Panc1 (cell line): ENCODE measurements at regions of chr2 and their contacts with region 1.

Region 1: GRCh38 chr2:136844546-136844945 is 79.2 kb downstream of the THSD7B start:
- DNase-seq: no peak
- ATAC-seq: no peak
- H3K4me3 ChIP-seq: no peak overlapping the region
- H3K27ac ChIP-seq: no peak overlapping the region
- H3K4me1 ChIP-seq: no peaks in the 10 kb centered on the region
- H3K27me3 ChIP-seq: no peaks in the 10 kb centered on the region
- CTCF ChIP-seq: no peak

Region 2: DNA sequence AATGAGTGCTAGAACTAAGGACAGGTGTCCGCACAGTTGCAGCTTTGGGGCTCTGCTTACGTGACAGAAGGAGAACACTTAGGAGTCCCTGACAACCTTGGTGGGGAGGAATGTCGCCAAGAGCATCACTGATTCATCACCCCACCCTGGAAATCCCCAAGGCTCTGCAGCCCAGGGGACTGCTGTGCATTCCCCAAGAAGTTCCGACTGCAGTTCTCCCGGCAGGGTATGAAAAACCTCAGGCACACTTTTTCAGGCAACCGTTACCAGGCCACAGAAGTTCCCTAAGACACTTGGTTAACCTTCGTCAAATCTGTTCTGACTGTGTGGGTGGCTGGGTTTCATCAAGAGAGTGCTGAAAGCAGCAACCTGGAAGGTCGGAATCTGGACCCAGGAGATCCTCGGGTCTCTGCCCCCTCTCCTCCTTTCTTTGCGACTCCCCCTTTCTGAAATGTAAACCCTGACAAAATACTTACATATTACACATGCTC is 534.5 kb before region 1 on chr2:
- CTCF ChIA-PET with region 1: no interaction called
- POLR2A ChIA-PET with region 1: no interaction called
- in situ Hi-C with region 1: no loop called
- intact Hi-C with region 1: loop called (anchors 10 kb)
- DNase-seq: no peak
- ATAC-seq: peak; percentile 56
- H3K4me3 ChIP-seq: no peak overlapping the region
- H3K27ac ChIP-seq: no peak overlapping the region
- H3K4me1 ChIP-seq: no peaks in the 10 kb centered on the region
- H3K27me3 ChIP-seq: 0 out of 2 replicates have a peak, but pooled peaks cover 2% of the 10 kb centered on the region
- CTCF ChIP-seq: no peak

Region 3: DNA sequence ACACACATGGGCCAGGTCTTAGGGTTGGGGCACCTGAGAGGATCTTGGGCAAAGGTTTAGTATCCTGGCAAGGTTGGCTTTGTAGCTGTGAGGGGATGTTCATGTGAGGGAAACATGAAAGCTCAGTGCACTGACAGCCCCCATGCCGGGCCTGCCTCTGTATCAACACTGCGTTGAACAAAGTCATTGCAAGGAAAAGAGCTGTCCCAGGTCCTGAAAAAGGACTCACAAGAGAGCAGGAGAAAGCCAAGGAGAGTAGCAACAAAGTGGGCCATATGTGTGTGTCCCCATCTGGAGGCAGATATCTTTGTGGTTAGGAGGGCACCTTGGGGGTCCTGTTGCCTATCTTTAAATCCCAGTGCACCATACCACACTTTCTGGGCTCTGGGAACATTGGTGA is 317.0 kb before region 1 on chr2:
- CTCF ChIA-PET with region 1: no interaction called
- POLR2A ChIA-PET with region 1: no interaction called
- in situ Hi-C with region 1: no loop called
- intact Hi-C with region 1: no loop called
- DNase-seq: no peak
- ATAC-seq: no peak
- H3K4me3 ChIP-seq: no peak overlapping the region
- H3K27ac ChIP-seq: no peak overlapping the region
- H3K4me1 ChIP-seq: no peaks in the 10 kb centered on the region
- H3K27me3 ChIP-seq: no peaks in the 10 kb centered on the region
- CTCF ChIP-seq: no peak

Region 4: GRCh38 chr2:136997557-136997956 is 153.0 kb after region 1 on chr2:
- CTCF ChIA-PET with region 1: no interaction called
- POLR2A ChIA-PET with region 1: no interaction called
- in situ Hi-C with region 1: no loop called
- intact Hi-C with region 1: no loop called
- DNase-seq: no peak
- ATAC-seq: no peak
- H3K4me3 ChIP-seq: no peak overlapping the region
- H3K27ac ChIP-seq: no peak overlapping the region
- H3K4me1 ChIP-seq: no peaks in the 10 kb centered on the region
- H3K27me3 ChIP-seq: no peaks in the 10 kb centered on the region
- CTCF ChIP-seq: no peak

Region 5: DNA sequence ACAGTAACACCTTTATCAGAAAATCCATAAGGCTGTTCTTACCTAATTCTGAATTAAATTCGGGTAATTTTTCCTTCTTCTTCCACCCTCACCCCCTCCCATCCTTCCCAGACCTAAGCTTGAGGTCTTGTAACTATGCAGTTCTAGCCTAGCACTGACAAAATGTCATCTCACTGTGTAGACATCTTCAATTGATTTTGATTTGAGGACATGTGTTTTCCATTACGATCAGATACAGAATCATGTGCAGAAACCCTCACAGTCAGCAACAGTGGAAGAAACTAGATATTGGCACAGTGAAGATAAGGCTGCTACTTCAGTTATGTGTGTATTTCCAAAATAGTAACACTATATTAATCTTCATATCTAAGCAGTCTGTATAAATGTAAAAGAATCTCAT is 165.4 kb after region 1 on chr2:
- CTCF ChIA-PET with region 1: no interaction called
- POLR2A ChIA-PET with region 1: no interaction called
- in situ Hi-C with region 1: no loop called
- intact Hi-C with region 1: no loop called
- DNase-seq: no peak
- ATAC-seq: no peak
- H3K4me3 ChIP-seq: no peak overlapping the region
- H3K27ac ChIP-seq: no peak overlapping the region
- H3K4me1 ChIP-seq: no peaks in the 10 kb centered on the region
- H3K27me3 ChIP-seq: no peaks in the 10 kb centered on the region
- CTCF ChIP-seq: no peak

Region 6: GRCh38 chr2:137741963-137742362 is 897.4 kb after region 1 on chr2:
- CTCF ChIA-PET with region 1: no interaction called
- POLR2A ChIA-PET with region 1: no interaction called
- in situ Hi-C with region 1: no loop called
- intact Hi-C with region 1: no loop called
- DNase-seq: no peak
- ATAC-seq: no peak
- H3K4me3 ChIP-seq: no peak overlapping the region
- H3K27ac ChIP-seq: no peak overlapping the region
- H3K4me1 ChIP-seq: no peaks in the 10 kb centered on the region
- H3K27me3 ChIP-seq: no peaks in the 10 kb centered on the region
- CTCF ChIP-seq: no peak